CD14-positive monocyte (primary cell): ENCODE measurements at regions of chr13 and their contacts with region 1.

Region 1: DNA sequence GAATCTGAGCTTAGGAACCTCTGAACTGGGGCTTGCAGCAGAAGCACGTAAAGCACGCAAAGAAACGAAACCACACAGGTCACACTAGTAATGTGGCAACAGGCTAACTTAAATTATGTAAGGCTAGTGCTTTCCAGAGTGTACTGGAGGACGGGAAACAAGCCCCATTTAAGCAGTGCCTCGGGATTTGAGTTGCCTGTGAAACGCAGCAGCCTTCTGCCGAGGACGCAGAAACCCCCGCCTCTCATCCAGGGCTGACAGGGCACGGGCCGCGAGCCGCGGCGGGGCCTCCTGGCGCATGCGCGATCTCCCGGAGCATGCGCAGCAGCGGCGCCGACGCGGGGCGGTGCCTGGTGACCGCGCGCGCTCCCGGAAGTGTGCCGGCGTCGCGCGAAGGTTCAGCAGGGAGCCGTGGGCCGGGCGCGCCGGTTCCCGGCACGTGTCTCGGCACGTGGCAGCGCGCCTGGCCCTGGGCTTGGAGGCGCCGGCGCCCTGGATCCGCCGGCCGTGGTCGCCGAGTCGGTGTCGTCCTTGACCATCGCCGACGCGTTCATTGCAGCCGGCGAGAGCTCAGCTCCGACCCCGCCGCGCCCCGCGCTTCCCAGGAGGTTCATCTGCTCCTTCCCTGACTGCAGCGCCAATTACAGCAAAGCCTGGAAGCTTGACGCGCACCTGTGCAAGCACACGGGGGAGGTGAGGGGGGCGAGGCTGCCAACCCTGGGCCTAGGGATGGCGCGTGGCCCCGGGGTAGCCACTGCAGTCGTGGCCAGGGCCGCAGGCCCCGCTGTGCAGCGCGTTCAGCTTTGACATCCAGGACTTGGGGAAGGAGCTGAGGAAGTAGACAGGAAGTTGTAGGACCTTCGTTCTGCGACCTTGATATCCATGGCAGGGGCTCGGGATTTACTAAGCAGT is at the start of gene GTF3A:
- DNase-seq: peak; percentile 85 to 90 (median 86)
- H3K4me3 ChIP-seq: peak within 1 kb of the TSS; percentile 61 to 94 (median 80)
- H3K4me3 Mint-ChIP-seq: peak within 1 kb of the TSS; percentile 74 to 93
- H3K27ac ChIP-seq: peak within 1 kb of the TSS; percentile 86 to 94
- H3K27ac Mint-ChIP-seq: peak within 1 kb of the TSS; percentile 92 to 99 (median 98)
- H3K4me1 ChIP-seq: peaks cover 45 to 51% of the 10 kb centered on the region in 2 donors
- H3K4me1 Mint-ChIP-seq: peaks cover 40% of the 10 kb centered on the region
- H3K27me3 ChIP-seq: no peaks in the 10 kb centered on the region
- H3K27me3 Mint-ChIP-seq: peaks cover 0 to 2% (median 1%) of the 10 kb centered on the region in 3 donors
- CTCF ChIP-seq: no peak
- polyA plus RNA-seq, gene GTF3A: 88.8 to 259 (median 179) TPM

Region 2: GRCh38 chr13:27226991-27227390 is 197.5 kb before region 1 on chr13:
- intact Hi-C with region 1: no loop called
- DNase-seq: no peak
- H3K4me3 ChIP-seq: no peak overlapping the region
- H3K4me3 Mint-ChIP-seq: no peak overlapping the region
- H3K27ac ChIP-seq: no peak overlapping the region
- H3K27ac Mint-ChIP-seq: no peak overlapping the region
- H3K4me1 ChIP-seq: no peaks in the 10 kb centered on the region
- H3K4me1 Mint-ChIP-seq: no peaks in the 10 kb centered on the region
- H3K27me3 ChIP-seq: no peaks in the 10 kb centered on the region
- H3K27me3 Mint-ChIP-seq: peaks cover 2 to 4% (median 2%) of the 10 kb centered on the region in 3 donors
- CTCF ChIP-seq: no peak

Region 3: DNA sequence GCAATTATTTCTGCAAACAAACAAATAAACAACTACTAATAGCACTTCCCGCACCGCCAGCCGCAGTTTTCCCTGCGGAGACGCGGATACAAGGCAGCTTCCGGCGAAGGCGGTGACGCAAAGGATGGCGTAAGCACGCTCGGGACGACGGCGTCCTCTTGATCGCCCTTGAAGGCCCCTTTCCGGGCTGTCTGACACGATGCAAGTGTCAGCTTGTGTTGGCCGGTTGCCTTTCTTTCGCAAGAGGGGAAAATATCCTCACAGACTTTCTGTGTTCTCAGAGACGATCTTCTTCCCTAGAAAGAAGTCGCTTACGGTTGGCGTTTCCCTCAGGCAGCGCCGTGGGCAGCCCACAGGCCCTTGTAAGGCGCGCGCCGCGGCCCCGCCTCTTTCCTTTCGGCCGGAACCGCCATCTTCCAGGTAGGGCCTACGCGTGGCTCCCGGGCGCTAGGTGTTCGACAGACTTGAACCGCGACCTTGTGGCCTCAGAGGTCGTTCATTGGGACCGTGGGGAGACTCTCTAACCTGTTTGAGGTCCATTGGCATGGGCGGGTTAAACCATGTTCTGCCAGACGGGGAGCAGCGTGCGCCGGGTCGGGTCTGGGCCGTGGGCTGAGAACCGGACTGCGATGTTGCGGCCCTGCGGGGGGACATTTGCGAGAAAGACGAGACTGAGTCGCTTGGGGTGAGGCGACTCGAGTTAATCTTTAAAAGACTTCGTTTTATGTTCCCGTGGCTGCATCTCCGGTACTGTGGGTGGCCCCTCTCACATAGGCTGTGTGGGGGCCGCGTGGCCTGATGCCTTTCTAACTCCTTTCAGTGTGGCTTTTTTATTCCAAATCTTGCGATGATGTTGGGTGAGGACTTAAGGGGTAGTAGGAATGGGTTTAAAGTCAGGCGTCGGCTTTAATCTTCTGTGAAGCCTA is 173.1 kb before region 1 on chr13 and contains the start of gene RPL21:
- intact Hi-C with region 1: loop called in 1 of 2 experiments (anchors 10 kb)
- DNase-seq: peak; percentile 93 to 97 (median 96)
- H3K4me3 ChIP-seq: peak within 1 kb of the TSS; percentile 64 to 94 (median 72)
- H3K4me3 Mint-ChIP-seq: peak within 1 kb of the TSS; percentile 96 to 97
- H3K27ac ChIP-seq: peak within 1 kb of the TSS; percentile 87 to 94
- H3K27ac Mint-ChIP-seq: peak within 1 kb of the TSS; percentile 98 to 99 (median 99)
- H3K4me1 ChIP-seq: peaks cover 11 to 25% of the 10 kb centered on the region in 2 donors
- H3K4me1 Mint-ChIP-seq: peaks cover 25% of the 10 kb centered on the region
- H3K27me3 ChIP-seq: no peaks in the 10 kb centered on the region
- H3K27me3 Mint-ChIP-seq: no peaks in the 10 kb centered on the region
- CTCF ChIP-seq: no peak
- polyA plus RNA-seq, gene RPL21: 1,311 to 1,781 (median 1,417) TPM

Region 4: GRCh38 chr13:27449936-27450828 is 25.7 kb after region 1 on chr13 and contains the start of gene MTIF3:
- intact Hi-C with region 1: loop called in 1 of 2 experiments (anchors 2 kb)
- DNase-seq: peak; percentile 85 to 87 (median 85)
- H3K4me3 ChIP-seq: peak within 1 kb of the TSS; percentile 83 to 89 (median 86)
- H3K4me3 Mint-ChIP-seq: peak within 1 kb of the TSS; percentile 96 to 97
- H3K27ac ChIP-seq: peak within 1 kb of the TSS; percentile 93 to 95
- H3K27ac Mint-ChIP-seq: peak within 1 kb of the TSS; percentile 92 to 98 (median 96)
- H3K4me1 ChIP-seq: peaks cover 22 to 40% of the 10 kb centered on the region in 2 donors
- H3K4me1 Mint-ChIP-seq: peaks cover 42% of the 10 kb centered on the region
- H3K27me3 ChIP-seq: no peaks in the 10 kb centered on the region
- H3K27me3 Mint-ChIP-seq: peaks cover 1 to 5% (median 4%) of the 10 kb centered on the region in 3 donors
- CTCF ChIP-seq: no peak
- polyA plus RNA-seq, gene MTIF3: 61.6 to 135 (median 86.6) TPM

Region 5: GRCh38 chr13:27481766-27482165 is 57.3 kb after region 1 on chr13:
- intact Hi-C with region 1: loop called in 1 of 2 experiments (anchors 2 kb)
- DNase-seq: peak in 2 of 3 donors; percentile 7 to 25
- H3K4me3 ChIP-seq: no peak overlapping the region
- H3K4me3 Mint-ChIP-seq: no peak overlapping the region
- H3K27ac ChIP-seq: no peak overlapping the region
- H3K27ac Mint-ChIP-seq: peak overlapping the region in 3 of 7 donors; percentile 74 to 97 (median 94)
- H3K4me1 ChIP-seq: peaks cover 22 to 29% of the 10 kb centered on the region in 2 donors
- H3K4me1 Mint-ChIP-seq: peaks cover 28% of the 10 kb centered on the region
- H3K27me3 ChIP-seq: no peaks in the 10 kb centered on the region
- H3K27me3 Mint-ChIP-seq: peaks cover 0 to 4% (median 4%) of the 10 kb centered on the region in 3 donors
- CTCF ChIP-seq: peak; percentile 62

Region 6: GRCh38 chr13:27620377-27621115 is 196.0 kb after region 1 on chr13 and contains the start of gene LNX2:
- intact Hi-C with region 1: loop called in 1 of 2 experiments (anchors 10 kb)
- DNase-seq: peak; percentile 87 to 93 (median 92)
- H3K4me3 ChIP-seq: peak within 1 kb of the TSS; percentile 71 to 93 (median 90)
- H3K4me3 Mint-ChIP-seq: peak within 1 kb of the TSS; percentile 91 to 95
- H3K27ac ChIP-seq: peak within 1 kb of the TSS; percentile 77 to 91
- H3K27ac Mint-ChIP-seq: peak within 1 kb of the TSS; percentile 80 to 94 (median 90)
- H3K4me1 ChIP-seq: peaks cover 31 to 44% of the 10 kb centered on the region in 2 donors
- H3K4me1 Mint-ChIP-seq: peaks cover 60% of the 10 kb centered on the region
- H3K27me3 ChIP-seq: no peaks in the 10 kb centered on the region
- H3K27me3 Mint-ChIP-seq: peaks cover 0 to 3% (median 0%) of the 10 kb centered on the region in 3 donors
- CTCF ChIP-seq: no peak
- polyA plus RNA-seq, gene LNX2: 0.89 to 2.3 (median 1.5) TPM

Region 7: GRCh38 chr13:27997904-27998522 is 573.5 kb after region 1 on chr13:
- intact Hi-C with region 1: no loop called
- DNase-seq: no peak
- H3K4me3 ChIP-seq: no peak overlapping the region
- H3K4me3 Mint-ChIP-seq: no peak overlapping the region
- H3K27ac ChIP-seq: no peak overlapping the region
- H3K27ac Mint-ChIP-seq: no peak overlapping the region
- H3K4me1 ChIP-seq: no peaks in the 10 kb centered on the region
- H3K4me1 Mint-ChIP-seq: peaks cover 3% of the 10 kb centered on the region
- H3K27me3 ChIP-seq: no peaks in the 10 kb centered on the region
- H3K27me3 Mint-ChIP-seq: peaks cover 3 to 7% (median 3%) of the 10 kb centered on the region in 3 donors
- CTCF ChIP-seq: peak; percentile 33